Heart left ventricle (tissue), 16 donors: ENCODE measurements at regions of chr1 and their contacts with region 1.

Region 1: DNA sequence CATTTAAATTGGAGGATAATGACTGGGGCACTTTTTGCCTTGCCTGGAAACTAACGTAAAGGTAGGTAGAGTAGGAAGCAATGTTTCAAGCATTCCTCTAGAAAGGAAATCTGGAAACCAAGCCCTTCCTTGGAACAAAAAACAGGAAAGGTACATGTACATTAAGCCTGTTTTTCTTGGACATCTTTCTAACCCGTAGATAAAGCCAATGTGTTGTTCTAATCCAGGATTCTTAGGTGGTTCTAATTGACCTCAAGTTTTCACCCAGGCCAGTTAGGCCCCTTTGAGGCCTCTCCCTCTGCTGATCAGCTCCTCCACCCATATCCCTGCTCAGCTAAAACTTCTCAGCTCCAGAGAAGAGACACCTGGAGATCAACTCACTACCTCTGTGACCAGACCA is 6.3 kb upstream of the DUSP23 start:
- DNase-seq: no peak
- ATAC-seq: peak; percentile 51 to 72 (median 62)
- H3K4me3 ChIP-seq: no peak overlapping the region
- H3K27ac ChIP-seq: peak overlapping the region in 8 of 12 donors; percentile 10 to 51 (median 48)
- H3K4me1 ChIP-seq: peaks cover 0 to 12% (median 3%) of the 10 kb centered on the region in 12 donors
- H3K27me3 ChIP-seq: peaks cover 0 to 4% (median 0%) of the 10 kb centered on the region in 9 donors
- CTCF ChIP-seq: no peak
- POLR2A ChIP-seq: no peak

Region 2: DNA sequence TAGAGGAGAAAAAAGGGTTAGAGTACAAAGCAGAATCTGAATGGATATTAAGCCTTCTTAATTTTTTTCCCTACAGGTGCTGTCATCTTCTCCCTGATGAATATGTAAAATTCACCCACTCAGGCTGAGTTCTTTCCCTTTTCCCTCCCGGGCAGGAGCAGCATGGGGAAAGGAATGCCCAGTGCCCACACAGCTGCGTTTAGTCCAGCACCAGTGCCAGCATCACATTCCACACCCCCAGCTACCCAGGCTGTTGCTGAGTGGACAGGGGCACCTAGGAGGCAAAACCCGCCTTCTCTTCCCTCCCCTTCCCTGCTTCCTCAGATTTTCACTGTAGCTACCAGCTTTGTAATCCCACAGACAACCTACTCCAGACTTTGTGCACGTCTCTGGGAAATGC is 606.4 kb before region 1 on chr1:
- intact Hi-C with region 1: loop called in 1 of 10 experiments (anchors 5 kb)
- DNase-seq: no peak
- ATAC-seq: no peak
- H3K4me3 ChIP-seq: no peak overlapping the region
- H3K27ac ChIP-seq: no peak overlapping the region
- H3K4me1 ChIP-seq: peaks cover 0 to 19% (median 0%) of the 10 kb centered on the region in 12 donors
- H3K27me3 ChIP-seq: peaks cover 9 to 66% (median 27%) of the 10 kb centered on the region in 9 donors
- CTCF ChIP-seq: no peak
- POLR2A ChIP-seq: no peak